OCI-LY7 (cell line): ENCODE measurements at regions of chr17 and their contacts with region 1.

Region 1: GRCh38 chr17:81253358-81254131 is 14.4 kb downstream of the NDUFAF8 start:
- DNase-seq: peak; percentile 63
- H3K4me3 ChIP-seq: no peak overlapping the region
- H3K27ac ChIP-seq: peak overlapping the region; percentile 94
- H3K4me1 ChIP-seq: peaks cover 39% of the 10 kb centered on the region
- CTCF ChIP-seq: peak; percentile 99

Region 2: DNA sequence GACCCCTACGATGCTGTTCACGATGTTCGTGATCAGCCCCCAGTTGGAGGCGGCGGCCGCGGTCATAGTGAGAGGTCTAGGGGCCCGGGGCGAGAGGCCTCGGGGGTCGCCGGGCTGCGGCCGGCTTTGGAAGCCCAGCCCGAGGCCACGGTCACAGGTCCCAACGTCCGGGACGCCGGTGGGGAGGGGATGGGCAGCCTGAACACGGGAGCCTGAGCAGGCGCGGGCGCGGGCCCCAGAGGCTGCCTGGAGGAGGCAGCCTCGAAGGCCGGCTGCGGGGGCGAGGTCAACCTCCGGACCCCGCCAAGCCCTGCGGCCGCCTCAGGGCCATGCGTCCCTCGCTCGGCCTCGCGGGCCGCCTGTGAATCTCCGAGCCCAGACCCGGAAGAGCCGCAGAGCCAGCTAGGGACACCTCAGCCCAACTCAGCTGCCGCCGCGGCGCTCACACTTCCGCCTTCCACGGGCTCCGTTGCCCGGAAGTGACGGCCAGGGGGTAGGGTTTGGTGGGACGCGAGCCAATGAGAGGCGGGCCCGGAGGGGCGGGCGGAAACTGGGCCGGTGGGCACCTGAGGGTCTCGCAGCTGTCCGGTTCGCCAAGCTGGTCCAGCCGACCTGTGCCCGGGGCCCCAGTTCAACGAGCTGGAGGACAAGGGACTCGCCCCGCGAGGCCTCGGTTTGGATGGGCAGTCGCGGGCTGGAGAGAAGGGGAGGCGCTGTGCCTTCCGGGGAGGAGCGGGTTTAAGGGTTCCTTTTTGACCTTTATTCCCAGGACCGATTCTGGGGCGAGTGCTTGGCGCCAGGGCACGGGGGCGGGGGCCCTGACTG is 41.5 kb after region 1 on chr17 and contains the start of gene SLC38A10:
- CTCF ChIA-PET with region 1: no interaction called
- POLR2A ChIA-PET with region 1: no interaction called
- intact Hi-C with region 1: loop called (anchors 1 kb)
- DNase-seq: peak; percentile 95
- H3K4me3 ChIP-seq: peak within 1 kb of the TSS; percentile 78
- H3K27ac ChIP-seq: peak within 1 kb of the TSS; percentile 49
- H3K4me1 ChIP-seq: peaks cover 28% of the 10 kb centered on the region
- CTCF ChIP-seq: peak; percentile 37; the same call in 1 of the 2 replicates
- total RNA-seq, gene SLC38A10: 50.5 and 56.0 TPM in 2 replicates

Region 3: DNA sequence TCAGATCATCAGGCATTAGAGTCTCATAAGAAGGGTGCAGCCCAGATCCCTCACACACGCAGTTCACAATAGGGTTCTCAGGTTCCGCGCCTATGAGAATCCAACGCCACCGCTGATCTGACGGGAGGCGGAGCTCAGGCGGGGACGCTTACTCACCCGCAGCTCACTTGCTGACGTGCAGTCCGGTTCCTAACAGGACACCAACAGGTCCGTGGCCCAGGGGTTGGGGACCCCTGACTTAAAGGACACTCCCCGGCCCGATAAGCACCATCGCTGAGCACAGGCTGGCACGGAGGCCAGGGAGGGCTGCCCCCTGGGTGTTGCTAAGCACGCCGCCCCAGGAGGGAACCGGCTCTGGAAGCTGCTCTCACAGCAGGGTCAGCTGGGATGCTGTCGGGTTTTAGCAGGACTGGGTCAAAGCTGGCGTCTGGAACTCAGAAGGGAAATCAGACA is 111.6 kb after region 1 on chr17:
- CTCF ChIA-PET with region 1: no interaction called
- POLR2A ChIA-PET with region 1: no interaction called
- intact Hi-C with region 1: no loop called
- DNase-seq: no peak
- H3K4me3 ChIP-seq: no peak overlapping the region
- H3K27ac ChIP-seq: no peak overlapping the region
- H3K4me1 ChIP-seq: peaks cover 9% of the 10 kb centered on the region
- CTCF ChIP-seq: no peak

Region 4: DNA sequence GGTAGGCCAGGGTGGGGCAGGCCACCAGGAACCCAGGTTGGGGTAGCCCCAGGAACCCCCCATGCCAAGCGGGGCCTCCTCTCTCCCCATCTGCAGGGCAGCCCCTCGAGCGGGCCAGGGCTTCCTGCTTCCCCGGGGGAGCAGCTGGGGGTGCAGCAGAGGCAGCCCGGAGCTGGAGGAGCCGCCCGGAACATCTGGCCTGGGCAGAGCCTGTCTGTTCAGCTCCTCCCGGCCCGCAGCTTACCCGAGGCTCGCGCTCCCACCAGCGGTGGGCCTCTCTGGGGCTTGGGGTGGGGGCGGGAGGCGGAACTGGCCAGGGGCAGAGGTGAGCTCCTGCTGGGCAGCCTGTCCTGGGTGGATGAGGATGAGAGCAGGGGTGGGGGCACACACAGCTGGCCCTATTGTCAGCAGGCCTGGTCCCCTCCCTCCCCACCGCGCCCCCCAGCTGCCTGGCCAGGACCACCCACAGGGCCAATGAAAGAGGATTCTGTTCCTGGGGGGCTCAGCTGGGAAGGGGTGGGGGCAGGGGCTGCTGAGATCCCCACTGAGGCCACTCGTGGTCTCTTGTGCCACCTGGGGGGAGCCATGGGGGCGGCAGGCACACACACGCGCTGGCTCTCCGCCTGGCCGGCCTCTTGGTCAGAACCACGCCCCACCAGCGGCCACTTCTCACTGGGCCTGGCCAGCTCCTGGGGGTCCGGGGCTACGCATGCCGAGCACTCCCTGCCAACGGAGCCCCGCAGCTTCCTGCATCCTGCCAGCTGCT is 176.4 kb after region 1 on chr17:
- CTCF ChIA-PET with region 1: no interaction called
- POLR2A ChIA-PET with region 1: no interaction called
- intact Hi-C with region 1: loop called (anchors 1 kb)
- DNase-seq: no peak
- H3K4me3 ChIP-seq: no peak overlapping the region
- H3K27ac ChIP-seq: no peak overlapping the region
- H3K4me1 ChIP-seq: no peaks in the 10 kb centered on the region
- CTCF ChIP-seq: peak; percentile 41; the same call in 1 of the 2 replicates

Region 5: GRCh38 chr17:81512560-81513371 is 259.2 kb after region 1 on chr17 and contains the start of gene ACTG1:
- CTCF ChIA-PET with region 1: no interaction called
- POLR2A ChIA-PET with region 1: interaction called, 3 read pairs
- intact Hi-C with region 1: loop called (anchors 2 kb)
- DNase-seq: peak; percentile 98
- H3K4me3 ChIP-seq: peak within 1 kb of the TSS; percentile 90
- H3K27ac ChIP-seq: peak within 1 kb of the TSS; percentile 89
- H3K4me1 ChIP-seq: peaks cover 58% of the 10 kb centered on the region
- CTCF ChIP-seq: no peak
- total RNA-seq, gene ACTG1: 2,245 and 2,707 TPM in 2 replicates

Region 6: GRCh38 chr17:81601525-81602120 is 348.1 kb after region 1 on chr17:
- CTCF ChIA-PET with region 1: no interaction called
- POLR2A ChIA-PET with region 1: interaction called, 5 read pairs
- intact Hi-C with region 1: loop called (anchors 2 kb)
- DNase-seq: peak; percentile 82
- H3K4me3 ChIP-seq: no peak overlapping the region
- H3K27ac ChIP-seq: peak overlapping the region; percentile 12
- H3K4me1 ChIP-seq: peaks cover 28% of the 10 kb centered on the region
- CTCF ChIP-seq: peak; percentile 100